ENCODE measurements at regions of chr21 and their contacts with region 1.

Region 1: DNA sequence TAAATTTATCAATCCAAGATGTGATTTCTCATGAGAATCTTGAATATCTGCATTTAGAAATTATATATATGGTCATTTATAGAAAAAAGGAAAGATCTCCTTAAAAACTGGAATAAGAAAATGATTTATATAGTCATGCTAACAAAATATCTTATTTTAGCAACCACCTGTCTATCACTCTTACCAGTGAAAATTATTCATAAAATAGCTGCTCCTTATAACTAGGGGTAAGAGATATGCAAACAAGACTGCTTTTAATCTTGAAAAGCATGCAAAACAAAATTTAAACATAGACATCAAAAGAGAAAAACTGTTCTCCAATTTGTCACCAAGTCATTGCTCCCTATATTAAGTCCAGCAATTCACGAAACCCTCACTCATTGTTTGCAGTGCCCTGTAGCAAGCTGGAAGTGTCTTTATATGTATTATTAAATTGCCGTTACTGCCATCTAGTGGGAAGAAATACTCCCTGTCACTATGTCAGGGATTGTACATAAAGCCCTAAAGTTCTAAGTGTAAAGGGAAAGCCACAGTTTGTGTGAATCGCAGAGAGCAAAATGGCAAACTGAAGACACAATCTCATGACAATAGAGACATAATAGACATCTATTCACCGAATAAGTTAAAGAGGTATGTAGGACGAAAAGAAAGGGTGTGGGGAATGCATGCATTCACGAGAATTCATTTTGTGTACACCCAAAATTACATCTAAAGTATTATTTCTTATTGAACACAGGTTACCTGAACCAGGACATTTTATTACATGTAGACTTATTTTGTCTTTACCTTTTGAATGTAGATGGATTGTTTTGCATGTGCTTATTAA is 600.5 kb downstream of the USP25 start:
- DNase-seq: peak in 1 of 6 donors; percentile 31
- ATAC-seq: peak; percentile 84 to 97 (median 96)
- H3K4me3 ChIP-seq: no peak overlapping the region
- H3K27ac ChIP-seq: no peak overlapping the region
- H3K4me1 ChIP-seq: no peaks in the 10 kb centered on the region
- H3K27me3 ChIP-seq: no peaks in the 10 kb centered on the region
- CTCF ChIP-seq: peak; percentile 17 to 56 (median 49)

Region 2: GRCh38 chr21:16071092-16071491 is 259.2 kb before region 1 on chr21:
- intact Hi-C with region 1: loop called in 1 of 3 experiments (anchors 10 kb)
- DNase-seq: no peak
- ATAC-seq: no peak
- H3K4me3 ChIP-seq: no peak overlapping the region
- H3K27ac ChIP-seq: no peak overlapping the region
- H3K4me1 ChIP-seq: no peaks in the 10 kb centered on the region
- H3K27me3 ChIP-seq: peaks cover 0 to 7% (median 0%) of the 10 kb centered on the region in 4 donors
- CTCF ChIP-seq: no peak

Region 3: GRCh38 chr21:16264319-16264718 is 66.0 kb before region 1 on chr21:
- intact Hi-C with region 1: no loop called
- DNase-seq: no peak
- ATAC-seq: peak in 2 of 4 donors; percentile 46 to 59
- H3K4me3 ChIP-seq: no peak overlapping the region
- H3K27ac ChIP-seq: no peak overlapping the region
- H3K4me1 ChIP-seq: no peaks in the 10 kb centered on the region
- H3K27me3 ChIP-seq: no peaks in the 10 kb centered on the region
- CTCF ChIP-seq: no peak